ENCODE measurements at regions of chr17 and their contacts with region 1.

Region 1: DNA sequence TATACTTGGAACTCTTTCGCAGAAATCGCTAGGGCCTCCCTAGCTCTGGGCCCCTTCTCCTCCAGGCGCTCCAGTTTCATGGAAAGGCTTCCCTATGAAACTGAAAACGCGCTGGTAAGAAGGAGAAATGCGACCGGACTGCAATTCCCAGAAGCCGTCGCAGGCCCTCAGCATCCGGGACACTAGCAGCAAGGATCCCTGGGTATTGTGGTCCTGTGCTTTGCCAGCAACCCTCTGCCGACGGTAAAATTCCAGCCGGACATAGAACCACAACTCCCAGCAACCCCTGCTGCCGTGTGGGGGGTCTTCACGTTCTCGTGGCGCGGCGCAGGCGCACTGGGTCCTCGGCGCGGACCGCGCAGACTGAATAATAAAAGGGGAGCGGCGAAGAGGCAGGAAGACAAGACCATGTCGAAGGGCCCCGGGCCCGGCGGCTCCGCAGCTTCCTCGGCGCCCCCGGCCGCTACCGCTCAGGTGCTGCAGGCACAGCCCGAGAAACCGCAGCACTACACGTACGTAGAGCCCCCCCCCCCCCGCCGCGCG is at the start of gene UNK:
- DNase-seq: peak; percentile 99
- H3K4me3 ChIP-seq: peak within 1 kb of the TSS in 2 of 3 experiments; percentile 32 to 55
- H3K27ac ChIP-seq: peak within 1 kb of the TSS; percentile 88
- H3K4me1 ChIP-seq: peaks cover 29% of the 10 kb centered on the region
- H3K27me3 ChIP-seq: no peaks in the 10 kb centered on the region
- CTCF ChIP-seq: no peak
- POLR2A ChIP-seq: peak; percentile 9
- total RNA-seq, gene UNK: 23.2 and 25.9 TPM in 2 replicates

Region 2: DNA sequence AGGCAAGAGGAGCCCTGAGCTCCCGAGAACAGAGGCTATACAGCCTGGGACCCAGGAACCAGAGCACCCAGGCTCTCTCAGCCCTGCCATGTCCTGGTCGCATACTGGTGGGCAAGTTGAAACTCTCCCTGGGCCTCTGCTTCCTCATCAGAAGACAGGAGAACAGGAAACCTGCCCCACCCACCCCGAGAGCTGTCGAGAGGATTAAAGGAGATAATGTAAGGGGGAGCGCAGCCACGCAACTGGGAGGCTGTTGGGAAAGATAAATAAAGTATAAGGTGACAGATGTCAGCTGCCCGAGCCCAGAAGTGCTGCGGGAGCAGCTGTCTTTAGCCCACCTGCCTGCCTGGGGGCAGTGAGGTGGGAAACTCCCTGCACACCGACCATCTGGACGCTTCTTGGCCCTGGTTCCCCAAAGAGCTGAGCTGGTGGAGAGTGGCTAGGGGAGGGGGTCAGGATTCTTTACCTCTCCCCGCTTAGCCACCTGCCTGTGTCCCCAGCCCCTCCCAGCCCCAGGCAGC is 1451.7 kb before region 1 on chr17:
- CTCF ChIA-PET with region 1: no interaction called
- POLR2A ChIA-PET with region 1: no interaction called
- dilution Hi-C with region 1: no loop called
- intact Hi-C with region 1: no loop called
- DNase-seq: no peak
- H3K4me3 ChIP-seq: no peak overlapping the region
- H3K27ac ChIP-seq: no peak overlapping the region
- H3K4me1 ChIP-seq: no peaks in the 10 kb centered on the region
- H3K27me3 ChIP-seq: no peaks in the 10 kb centered on the region
- CTCF ChIP-seq: no peak
- POLR2A ChIP-seq: no peak

Region 3: DNA sequence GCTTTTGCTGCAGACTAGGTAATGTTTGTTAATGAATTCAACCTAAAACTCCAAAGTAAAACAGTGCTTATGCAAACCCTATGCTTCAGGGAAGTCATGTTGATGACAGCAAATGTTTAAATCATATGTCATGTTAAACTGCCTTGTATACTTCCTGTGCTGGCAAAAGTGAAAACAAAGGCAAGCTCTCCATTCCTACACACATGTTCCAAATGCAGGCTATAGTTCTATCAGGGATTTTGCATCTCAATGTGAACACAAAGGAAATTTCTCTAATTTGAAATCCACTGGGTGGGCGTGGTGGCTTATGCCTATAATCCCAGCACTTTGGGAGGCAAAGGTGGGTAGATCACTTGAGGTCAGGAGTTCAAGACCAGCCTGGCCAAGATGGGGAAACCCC is 19.3 kb after region 1 on chr17:
- CTCF ChIA-PET with region 1: interaction called, 14 read pairs
- POLR2A ChIA-PET with region 1: no interaction called
- dilution Hi-C with region 1: no loop called
- intact Hi-C with region 1: no loop called
- DNase-seq: no peak
- H3K4me3 ChIP-seq: no peak overlapping the region
- H3K27ac ChIP-seq: no peak overlapping the region
- H3K4me1 ChIP-seq: no peaks in the 10 kb centered on the region
- H3K27me3 ChIP-seq: no peaks in the 10 kb centered on the region
- CTCF ChIP-seq: no peak
- POLR2A ChIP-seq: no peak

Region 4: GRCh38 chr17:75855310-75856081 is 71.0 kb after region 1 on chr17 and contains the start of gene WBP2:
- CTCF ChIA-PET with region 1: interaction called, 11 read pairs
- POLR2A ChIA-PET with region 1: interaction called, 23 read pairs
- dilution Hi-C with region 1: no loop called
- intact Hi-C with region 1: loop called (anchors 2 kb)
- DNase-seq: peak; percentile 100
- H3K4me3 ChIP-seq: peak within 1 kb of the TSS; percentile 19 to 76 (median 75)
- H3K27ac ChIP-seq: peak within 1 kb of the TSS; percentile 89
- H3K4me1 ChIP-seq: peaks cover 39% of the 10 kb centered on the region
- H3K27me3 ChIP-seq: no peaks in the 10 kb centered on the region
- CTCF ChIP-seq: peak; percentile 42 to 54
- POLR2A ChIP-seq: peak; percentile 81
- total RNA-seq, gene WBP2: 120 and 126 TPM in 2 replicates

Region 5: DNA sequence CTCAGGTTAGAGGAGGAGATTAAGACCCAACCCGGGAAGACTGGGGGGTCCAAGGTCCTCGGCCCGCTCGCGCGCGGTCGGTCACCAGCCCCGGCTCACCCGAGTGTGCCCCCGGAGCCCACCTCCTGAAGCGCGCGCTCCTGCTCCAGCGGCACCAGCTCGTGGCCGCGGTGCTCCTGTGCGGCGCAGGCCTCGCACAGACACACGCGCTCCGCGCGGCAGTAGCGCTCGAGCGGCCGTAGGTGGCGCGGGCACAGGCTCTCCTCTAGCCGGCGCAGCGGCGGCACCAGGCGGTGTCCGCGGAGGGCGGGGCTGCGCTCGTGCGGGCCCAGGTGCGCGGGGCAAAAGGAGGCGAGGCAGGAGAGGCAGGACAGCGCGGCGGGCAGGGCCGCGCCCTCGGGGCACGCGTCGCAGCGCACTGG is 93.2 kb after region 1 on chr17:
- CTCF ChIA-PET with region 1: interaction called, 4 read pairs
- POLR2A ChIA-PET with region 1: interaction called, 7 read pairs
- dilution Hi-C with region 1: no loop called
- intact Hi-C with region 1: loop called (anchors 1 kb)
- DNase-seq: peak; percentile 74
- H3K4me3 ChIP-seq: peak overlapping the region; percentile 1 to 67 (median 66)
- H3K27ac ChIP-seq: peak overlapping the region; percentile 70
- H3K4me1 ChIP-seq: peaks cover 34% of the 10 kb centered on the region
- H3K27me3 ChIP-seq: no peaks in the 10 kb centered on the region
- CTCF ChIP-seq: peak; percentile 33 to 66
- POLR2A ChIP-seq: no peak

Region 6: GRCh38 chr17:75927286-75927922 is 142.9 kb after region 1 on chr17:
- CTCF ChIA-PET with region 1: no interaction called
- POLR2A ChIA-PET with region 1: no interaction called
- dilution Hi-C with region 1: no loop called
- intact Hi-C with region 1: no loop called
- DNase-seq: no peak
- H3K4me3 ChIP-seq: no peak overlapping the region
- H3K27ac ChIP-seq: no peak overlapping the region
- H3K4me1 ChIP-seq: no peaks in the 10 kb centered on the region
- H3K27me3 ChIP-seq: no peaks in the 10 kb centered on the region
- CTCF ChIP-seq: peak in 1 of 2 donors; percentile 39
- POLR2A ChIP-seq: no peak

Measured in endothelial cell of umbilical vein (primary cell).